ENCODE measurements at regions of chr22 and their contacts with region 1.

Region 1: GRCh38 chr22:19679522-19680101 is 34.7 kb upstream of the SEPTIN5 start:
- DNase-seq: no peak
- H3K4me3 ChIP-seq: no peak overlapping the region
- H3K27ac ChIP-seq: no peak overlapping the region
- H3K4me1 ChIP-seq: no peaks in the 10 kb centered on the region; the same call in 1 of the 2 replicates
- H3K27me3 ChIP-seq: no peaks in the 10 kb centered on the region
- CTCF ChIP-seq: peak; percentile 85

Region 2: DNA sequence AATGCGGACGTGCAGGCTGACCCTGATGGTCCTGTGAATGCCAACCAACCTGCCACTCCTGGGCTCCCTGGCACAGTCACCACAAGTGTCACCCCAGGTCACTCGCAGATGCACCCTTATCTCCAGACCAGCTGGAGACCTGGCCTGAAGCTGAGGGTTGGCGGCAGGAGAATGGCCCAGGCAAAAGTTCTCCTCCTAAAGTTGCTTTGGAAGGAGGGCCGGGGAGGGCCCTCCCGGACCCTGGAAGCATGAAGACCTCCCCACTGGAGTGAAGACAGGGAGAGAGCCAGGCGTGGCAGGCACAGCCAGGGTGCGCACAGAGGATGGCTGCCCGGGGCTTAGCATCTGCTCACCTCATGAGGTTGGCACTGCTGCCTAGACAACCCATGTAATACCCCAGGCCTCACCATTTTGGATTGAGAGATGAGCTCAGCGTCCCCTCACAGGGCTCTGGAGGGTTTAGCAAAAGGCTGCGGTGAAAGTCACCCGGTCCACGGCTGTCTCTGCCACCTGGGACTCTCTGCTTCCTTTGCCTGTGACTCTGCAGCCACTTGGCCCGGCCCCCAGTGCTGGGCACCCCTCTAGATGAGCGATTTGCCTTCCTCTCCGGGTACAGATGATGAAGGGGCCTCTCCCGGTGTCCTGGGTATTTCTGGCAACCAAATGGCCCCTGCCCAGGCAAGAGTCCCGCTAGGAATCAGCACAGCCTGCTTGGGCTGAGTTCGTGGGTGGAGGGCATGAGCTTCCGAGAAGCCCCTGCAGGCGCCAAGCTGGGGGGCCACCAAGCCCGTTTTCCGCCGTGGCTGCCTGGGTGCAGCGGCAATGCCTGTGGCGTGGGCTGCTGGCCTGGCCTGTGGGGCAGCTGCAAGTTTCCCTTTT is 13.6 kb before region 1 on chr22:
- CTCF ChIA-PET with region 1: no interaction called
- POLR2A ChIA-PET with region 1: interaction called, 11 read pairs
- intact Hi-C with region 1: no loop called
- DNase-seq: peak; percentile 60 to 64
- H3K4me3 ChIP-seq: no peak overlapping the region
- H3K27ac ChIP-seq: no peak overlapping the region
- H3K4me1 ChIP-seq: peaks cover 18% of the 10 kb centered on the region
- H3K27me3 ChIP-seq: no peaks in the 10 kb centered on the region
- CTCF ChIP-seq: no peak

Region 3: GRCh38 chr22:19717691-19718455 is 38.3 kb after region 1 on chr22:
- CTCF ChIA-PET with region 1: no interaction called
- POLR2A ChIA-PET with region 1: no interaction called
- intact Hi-C with region 1: loop called (anchors 5 kb)
- DNase-seq: peak in 1 of 2 experiments; percentile 76
- H3K4me3 ChIP-seq: peak overlapping the region; percentile 49; the same call in 1 of the 2 replicates
- H3K27ac ChIP-seq: no peak overlapping the region
- H3K4me1 ChIP-seq: no peaks in the 10 kb centered on the region
- H3K27me3 ChIP-seq: no peaks in the 10 kb centered on the region; the same call in 1 of the 2 replicates
- CTCF ChIP-seq: peak; percentile 55